ENCODE measurements at regions of chr6 and their contacts with region 1.

Region 1: GRCh38 chr6:137094411-137095008 is 49.7 kb upstream of the IL20RA start:
- DNase-seq: peak; percentile 76
- H3K4me3 ChIP-seq: no peak overlapping the region
- H3K27ac ChIP-seq: no peak overlapping the region
- H3K4me1 ChIP-seq: no peaks in the 10 kb centered on the region
- H3K27me3 ChIP-seq: no peaks in the 10 kb centered on the region
- CTCF ChIP-seq: peak; percentile 58 to 64 (median 61)
- POLR2A ChIP-seq: no peak

Region 2: GRCh38 chr6:136886130-136886529 is 208.4 kb before region 1 on chr6:
- intact Hi-C with region 1: no loop called
- DNase-seq: no peak
- H3K4me3 ChIP-seq: no peak overlapping the region
- H3K27ac ChIP-seq: no peak overlapping the region
- H3K4me1 ChIP-seq: no peaks in the 10 kb centered on the region
- H3K27me3 ChIP-seq: no peaks in the 10 kb centered on the region
- CTCF ChIP-seq: no peak
- POLR2A ChIP-seq: no peak

Region 3: GRCh38 chr6:137001299-137001976 is 93.1 kb before region 1 on chr6:
- intact Hi-C with region 1: no loop called
- DNase-seq: no peak
- H3K4me3 ChIP-seq: no peak overlapping the region
- H3K27ac ChIP-seq: no peak overlapping the region
- H3K4me1 ChIP-seq: no peaks in the 10 kb centered on the region
- H3K27me3 ChIP-seq: no peaks in the 10 kb centered on the region
- CTCF ChIP-seq: no peak
- POLR2A ChIP-seq: no peak

Region 4: DNA sequence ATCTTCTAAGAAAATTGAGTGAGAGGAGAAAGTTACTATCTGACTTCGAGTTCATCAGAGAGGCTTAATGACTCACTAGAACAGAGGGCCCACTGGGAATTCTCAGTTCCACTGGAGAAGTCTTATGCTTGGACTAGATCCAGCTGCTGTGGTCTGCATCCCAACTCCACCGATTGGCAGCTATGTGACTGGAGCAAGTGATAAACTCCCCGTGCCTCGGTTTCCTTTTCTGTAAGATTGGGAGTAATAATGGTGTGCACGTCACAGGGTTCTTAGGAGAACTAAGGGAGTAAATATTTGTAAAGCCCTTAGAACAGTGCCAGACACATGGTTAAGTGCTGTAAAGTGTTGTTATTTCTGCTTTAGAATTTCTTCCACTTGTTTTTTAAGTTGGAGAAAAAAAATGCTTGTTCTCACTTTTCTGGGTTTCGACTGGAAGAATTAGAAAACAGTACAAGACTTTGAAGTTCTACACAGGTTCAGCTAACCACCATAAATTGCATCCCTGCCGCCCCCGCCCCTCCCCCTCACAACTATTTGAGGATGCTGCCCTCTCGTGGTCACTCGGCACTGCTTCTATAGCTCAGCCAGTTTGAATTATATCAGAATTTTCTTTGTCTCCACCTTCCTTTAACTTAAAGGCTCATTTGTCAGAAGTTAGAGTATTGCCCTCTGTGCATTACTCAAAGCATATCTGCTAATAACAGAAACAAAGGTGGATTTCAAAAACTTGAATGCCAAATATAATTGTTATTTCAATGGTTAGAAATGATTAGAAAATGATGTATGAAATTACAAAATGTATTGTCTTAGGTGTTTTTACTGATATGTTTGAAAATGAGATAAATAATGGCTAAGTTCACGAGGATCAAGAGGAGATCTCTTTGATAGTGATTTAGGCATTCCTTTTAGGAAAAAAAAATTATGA is 219.7 kb after region 1 on chr6:
- intact Hi-C with region 1: loop called (anchors 10 kb)
- DNase-seq: peak; percentile 89
- H3K4me3 ChIP-seq: no peak overlapping the region
- H3K27ac ChIP-seq: peak overlapping the region in 1 of 2 donors; percentile 44
- H3K4me1 ChIP-seq: no peaks in the 10 kb centered on the region
- H3K27me3 ChIP-seq: no peaks in the 10 kb centered on the region
- CTCF ChIP-seq: peak; percentile 63 to 89 (median 65)
- POLR2A ChIP-seq: no peak

Region 5: GRCh38 chr6:137637121-137637520 is 542.6 kb after region 1 on chr6:
- intact Hi-C with region 1: loop called (anchors 10 kb)
- DNase-seq: peak; percentile 21
- H3K4me3 ChIP-seq: no peak overlapping the region
- H3K27ac ChIP-seq: no peak overlapping the region
- H3K4me1 ChIP-seq: no peaks in the 10 kb centered on the region
- H3K27me3 ChIP-seq: no peaks in the 10 kb centered on the region
- CTCF ChIP-seq: no peak
- POLR2A ChIP-seq: no peak